ENCODE measurements at regions of chr2 and their contacts with region 1.

Region 1: GRCh38 chr2:102063941-102064678 is 72.3 kb downstream of the IL1R2 start:
- DNase-seq: peak; percentile 57
- ATAC-seq: peak; percentile 9
- H3K4me3 Mint-ChIP-seq: no peak overlapping the region
- H3K27ac Mint-ChIP-seq: peak overlapping the region; percentile 16
- H3K4me1 Mint-ChIP-seq: peaks cover 31% of the 10 kb centered on the region
- H3K27me3 Mint-ChIP-seq: peaks cover 1% of the 10 kb centered on the region
- CTCF ChIP-seq: no peak

Region 2: GRCh38 chr2:102141970-102142828 is 78.1 kb after region 1 on chr2 and contains the start of gene IL1R1:
- CTCF ChIA-PET with region 1: interaction called, 6 read pairs
- POLR2A ChIA-PET with region 1: interaction called, 10 read pairs
- intact Hi-C with region 1: no loop called
- DNase-seq: no peak
- ATAC-seq: peak; percentile 40
- H3K4me3 Mint-ChIP-seq: peak within 1 kb of the TSS; percentile 39
- H3K27ac Mint-ChIP-seq: no peak within 1 kb of the TSS
- H3K4me1 Mint-ChIP-seq: peaks cover 39% of the 10 kb centered on the region
- H3K27me3 Mint-ChIP-seq: peaks cover 28% of the 10 kb centered on the region
- CTCF ChIP-seq: no peak
- total RNA-seq, gene IL1R1: 0.63 to 0.68 TPM

Region 3: GRCh38 chr2:102229141-102229769 is 165.1 kb after region 1 on chr2:
- CTCF ChIA-PET with region 1: no interaction called
- POLR2A ChIA-PET with region 1: no interaction called
- intact Hi-C with region 1: no loop called
- DNase-seq: no peak
- ATAC-seq: no peak
- H3K4me3 Mint-ChIP-seq: no peak overlapping the region
- H3K27ac Mint-ChIP-seq: no peak overlapping the region
- H3K4me1 Mint-ChIP-seq: peaks cover 56% of the 10 kb centered on the region
- H3K27me3 Mint-ChIP-seq: no peaks in the 10 kb centered on the region
- CTCF ChIP-seq: no peak

Measured in activated CD8-positive, alpha-beta T cell treated with anti-CD3 and anti-CD28 coated beads for 36 hours (primary cell).